ENCODE measurements at regions of chr10 and their contacts with region 1.

Region 1: DNA sequence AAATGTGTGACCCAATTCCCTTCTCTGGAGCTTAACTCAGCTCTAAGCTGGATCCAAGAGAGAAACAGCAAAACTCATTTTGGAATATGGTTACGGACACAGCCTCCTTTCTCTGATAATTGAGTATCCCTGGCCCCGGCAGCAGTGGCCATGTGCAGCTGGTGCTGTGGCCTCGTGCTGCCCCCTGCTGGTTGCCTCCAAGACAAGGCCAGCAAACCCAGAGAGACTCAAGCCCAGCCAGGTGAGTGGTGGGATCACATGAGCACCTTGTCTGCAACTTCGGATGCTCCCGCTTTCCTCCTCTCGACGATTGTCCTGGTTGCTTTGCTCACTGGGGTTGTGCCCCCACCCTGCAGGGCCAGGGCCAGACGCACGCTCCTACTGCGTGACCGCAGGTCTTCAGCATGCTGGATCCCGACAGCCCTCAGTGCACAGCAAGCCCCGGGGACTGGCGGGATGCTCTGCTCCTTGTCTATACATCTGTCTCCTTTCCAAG is 19.4 kb downstream of the SFTPD start:
- DNase-seq: peak; percentile 90
- H3K4me3 ChIP-seq: no peak overlapping the region
- H3K27ac ChIP-seq: no peak overlapping the region
- H3K4me1 ChIP-seq: peaks cover 0 to 5% (median 0%) of the 10 kb centered on the region in 4 donors
- H3K27me3 ChIP-seq: peaks cover 0 to 6% (median 0%) of the 10 kb centered on the region in 3 donors
- CTCF ChIP-seq: peak; percentile 67 to 90 (median 85)
- EP300 ChIP-seq: no peak
- POLR2A ChIP-seq: no peak

Region 2: DNA sequence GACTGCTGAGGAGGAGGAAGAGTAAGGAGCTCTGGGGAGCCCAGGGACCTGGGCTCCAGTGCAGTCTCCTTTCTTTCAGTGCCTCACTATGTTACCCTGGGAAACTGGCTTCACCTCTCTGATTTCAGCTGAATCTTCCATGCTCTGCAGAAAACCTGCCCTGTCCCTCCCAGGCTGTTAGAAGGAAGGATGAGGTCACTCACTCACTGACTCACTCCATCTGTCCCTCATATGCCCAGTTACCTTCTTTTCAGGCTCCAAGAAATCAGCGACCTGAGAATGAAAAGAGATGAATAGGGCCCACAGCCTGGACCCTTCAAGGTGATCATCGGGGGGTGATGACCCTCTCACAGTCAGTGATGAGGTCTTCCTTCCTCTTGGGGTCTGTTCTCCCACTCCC is 369.7 kb before region 1 on chr10:
- intact Hi-C with region 1: loop called (anchors 10 kb)
- DNase-seq: no peak
- H3K4me3 ChIP-seq: no peak overlapping the region
- H3K27ac ChIP-seq: no peak overlapping the region
- H3K4me1 ChIP-seq: peaks cover 0 to 5% (median 0%) of the 10 kb centered on the region in 4 donors
- H3K27me3 ChIP-seq: peaks cover 0 to 5% (median 0%) of the 10 kb centered on the region in 3 donors
- CTCF ChIP-seq: no peak
- EP300 ChIP-seq: no peak
- POLR2A ChIP-seq: no peak

Measured in sigmoid colon (tissue), 7 donors.